Transverse colon (tissue), 4 donors: ENCODE measurements at regions of chr1 and their contacts with region 1.

Region 1: GRCh38 chr1:7646981-7647901 is 123.9 kb upstream of the VAMP3 start:
- DNase-seq: peak; percentile 74
- H3K4me3 ChIP-seq: no peak overlapping the region
- H3K27ac ChIP-seq: no peak overlapping the region
- H3K4me1 ChIP-seq: peaks cover 0 to 3% (median 0%) of the 10 kb centered on the region in 4 donors
- H3K27me3 ChIP-seq: no peaks in the 10 kb centered on the region
- CTCF ChIP-seq: peak; percentile 91 to 97 (median 94)
- EP300 ChIP-seq: no peak
- POLR2A ChIP-seq: no peak

Region 2: DNA sequence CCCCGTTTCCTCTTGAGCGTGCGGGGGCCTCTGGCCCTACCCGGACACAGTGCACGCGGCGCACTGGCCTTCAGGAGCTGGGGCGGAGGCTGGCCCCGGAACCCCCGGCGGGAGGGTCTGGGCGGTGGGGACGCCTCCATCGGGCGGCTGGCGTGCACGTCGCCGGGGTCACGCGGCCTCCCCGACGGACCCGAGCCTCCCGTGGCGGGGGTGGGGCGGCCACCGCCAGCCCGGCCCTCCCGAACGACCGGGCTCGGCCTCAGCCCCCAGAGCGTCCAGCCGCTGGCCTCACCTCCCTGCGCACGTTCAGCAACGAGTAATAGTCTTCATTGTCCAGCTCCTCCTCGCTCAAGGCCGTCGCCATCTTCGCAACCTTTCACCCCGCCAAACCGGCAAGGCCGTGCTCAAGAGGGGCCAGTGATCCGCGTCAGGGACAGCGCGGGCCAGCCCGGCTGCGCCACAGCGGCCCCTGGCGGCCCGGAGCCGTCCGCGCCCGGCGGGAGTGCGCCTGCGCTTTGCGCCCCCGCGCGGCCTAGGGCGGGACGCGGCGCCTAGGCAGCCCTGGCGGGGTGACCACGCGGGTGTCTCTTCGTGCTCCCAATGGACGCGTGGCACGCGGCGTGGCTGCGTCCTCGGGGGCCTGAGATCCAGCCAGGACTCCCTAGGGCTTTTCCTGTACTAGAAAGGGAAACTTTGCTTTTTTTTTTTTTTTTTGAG is 945.6 kb before region 1 on chr1 and contains the start of gene DNAJC11:
- in situ Hi-C with region 1: loop called in 1 of 4 experiments (anchors 25 kb)
- intact Hi-C with region 1: no loop called
- DNase-seq: peak; percentile 91
- H3K4me3 ChIP-seq: peak within 1 kb of the TSS; percentile 81 to 99 (median 96)
- H3K27ac ChIP-seq: peak within 1 kb of the TSS; percentile 85 to 96 (median 92)
- H3K4me1 ChIP-seq: peaks cover 3 to 47% (median 25%) of the 10 kb centered on the region in 4 donors
- H3K27me3 ChIP-seq: no peaks in the 10 kb centered on the region
- CTCF ChIP-seq: peak; percentile 45 to 90 (median 76)
- EP300 ChIP-seq: no peak
- POLR2A ChIP-seq: peak; percentile 30
- total RNA-seq, gene DNAJC11: 62.1 to 80.0 (median 70.9) TPM

Region 3: GRCh38 chr1:6794164-6794563 is 853.1 kb before region 1 on chr1:
- in situ Hi-C with region 1: no loop called
- intact Hi-C with region 1: loop called (anchors 5 kb)
- DNase-seq: no peak
- H3K4me3 ChIP-seq: no peak overlapping the region
- H3K27ac ChIP-seq: no peak overlapping the region
- H3K4me1 ChIP-seq: peaks cover 0 to 30% (median 2%) of the 10 kb centered on the region in 4 donors
- H3K27me3 ChIP-seq: no peaks in the 10 kb centered on the region
- CTCF ChIP-seq: peak; percentile 35 to 52 (median 42)
- EP300 ChIP-seq: no peak
- POLR2A ChIP-seq: no peak

Region 4: DNA sequence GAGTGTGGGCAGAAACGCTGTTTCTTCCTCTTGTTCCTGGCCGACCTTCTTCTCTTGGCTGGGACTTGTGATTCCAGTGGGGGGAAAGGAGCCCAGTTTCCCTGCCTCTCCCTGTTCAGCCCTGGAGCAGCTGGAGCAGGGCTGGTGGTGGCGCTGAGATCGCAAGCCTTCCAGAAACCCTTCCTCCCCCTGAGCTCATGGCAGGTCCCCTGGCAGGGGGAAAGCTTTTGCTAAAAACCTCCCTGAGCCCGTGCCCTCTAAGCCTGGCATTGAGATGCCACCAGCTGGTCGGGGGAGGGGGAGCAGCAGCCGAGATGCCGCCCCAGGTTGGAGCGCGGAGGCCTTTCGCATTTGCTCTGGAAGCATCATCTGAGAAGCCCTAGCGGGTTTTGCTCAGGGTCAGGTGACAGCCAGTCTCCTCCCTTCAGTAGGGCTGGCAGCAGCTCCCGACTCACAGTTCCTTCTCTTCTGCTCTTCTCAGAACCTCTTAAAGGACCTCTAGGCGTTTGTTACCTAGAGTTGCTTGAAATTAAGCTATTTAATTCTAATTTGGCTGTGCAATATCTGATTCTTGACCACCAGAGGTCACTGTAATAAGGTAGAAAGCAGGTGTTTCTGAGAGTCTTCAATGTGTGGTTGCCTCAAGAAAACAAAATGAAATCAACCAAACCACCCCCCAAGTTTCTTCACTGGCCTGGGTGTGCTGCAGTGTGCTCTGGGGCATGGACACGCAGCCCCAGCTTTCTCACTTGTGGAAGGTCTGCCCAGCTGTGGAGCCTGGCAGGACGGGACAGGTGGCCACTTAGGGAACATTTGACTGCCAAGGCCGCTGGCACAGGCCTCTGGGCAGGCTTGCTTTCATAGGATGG is 604.7 kb before region 1 on chr1:
- in situ Hi-C with region 1: loop called in 2 of 4 experiments (anchors 25 kb)
- intact Hi-C with region 1: loop called (anchors 10 kb)
- DNase-seq: no peak
- H3K4me3 ChIP-seq: no peak overlapping the region
- H3K27ac ChIP-seq: no peak overlapping the region
- H3K4me1 ChIP-seq: no peaks in the 10 kb centered on the region
- H3K27me3 ChIP-seq: peaks cover 14% of the 10 kb centered on the region
- CTCF ChIP-seq: peak; percentile 42 to 53 (median 44)
- EP300 ChIP-seq: no peak
- POLR2A ChIP-seq: no peak

Region 5: DNA sequence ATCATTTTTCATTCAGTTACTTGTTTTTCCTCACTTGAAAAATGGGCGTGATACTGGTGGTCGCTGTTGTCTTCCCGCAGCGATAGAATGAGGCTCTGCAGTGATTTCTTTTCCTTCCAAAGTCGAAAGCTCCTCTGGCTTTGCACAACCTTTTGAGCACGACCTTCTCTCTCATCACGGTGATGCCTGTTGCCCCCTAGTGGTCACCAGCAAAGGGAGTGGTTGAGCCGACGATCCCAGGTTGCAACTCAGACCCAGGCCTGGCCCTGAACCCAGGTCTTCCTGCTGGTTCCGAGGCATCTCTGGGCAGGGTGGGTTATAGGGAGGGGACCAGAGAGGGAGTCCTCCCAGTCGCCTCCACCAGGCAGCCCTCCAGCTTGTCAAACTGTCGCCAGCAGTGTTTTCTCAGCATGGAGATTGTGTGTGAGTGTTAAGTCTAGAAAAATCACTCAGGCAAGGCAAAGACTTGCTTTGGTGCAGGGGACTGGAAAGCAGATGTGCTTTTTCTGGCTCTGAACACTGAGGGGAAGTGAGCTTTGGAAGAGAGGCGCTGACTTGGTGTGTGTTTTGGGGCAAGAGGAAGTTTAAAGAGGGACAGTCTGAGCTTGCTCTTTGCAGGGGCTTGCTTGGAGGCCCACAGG is 576.7 kb before region 1 on chr1:
- in situ Hi-C with region 1: loop called in 2 of 4 experiments (anchors 25 kb)
- intact Hi-C with region 1: no loop called
- DNase-seq: peak; percentile 57
- H3K4me3 ChIP-seq: peak overlapping the region in 2 of 4 donors; percentile 10 to 38
- H3K27ac ChIP-seq: no peak overlapping the region
- H3K4me1 ChIP-seq: peaks cover 0 to 9% (median 5%) of the 10 kb centered on the region in 4 donors
- H3K27me3 ChIP-seq: peaks cover 16% of the 10 kb centered on the region
- CTCF ChIP-seq: peak; percentile 71 to 85 (median 81)
- EP300 ChIP-seq: no peak
- POLR2A ChIP-seq: no peak

Region 6: GRCh38 chr1:7207875-7208646 is 439.2 kb before region 1 on chr1:
- in situ Hi-C with region 1: loop called in 2 of 4 experiments (anchors 25 kb)
- intact Hi-C with region 1: no loop called
- DNase-seq: peak; percentile 35
- H3K4me3 ChIP-seq: no peak overlapping the region
- H3K27ac ChIP-seq: no peak overlapping the region
- H3K4me1 ChIP-seq: no peaks in the 10 kb centered on the region
- H3K27me3 ChIP-seq: peaks cover 4% of the 10 kb centered on the region
- CTCF ChIP-seq: peak; percentile 16 to 52 (median 45)
- EP300 ChIP-seq: no peak
- POLR2A ChIP-seq: no peak

Region 7: DNA sequence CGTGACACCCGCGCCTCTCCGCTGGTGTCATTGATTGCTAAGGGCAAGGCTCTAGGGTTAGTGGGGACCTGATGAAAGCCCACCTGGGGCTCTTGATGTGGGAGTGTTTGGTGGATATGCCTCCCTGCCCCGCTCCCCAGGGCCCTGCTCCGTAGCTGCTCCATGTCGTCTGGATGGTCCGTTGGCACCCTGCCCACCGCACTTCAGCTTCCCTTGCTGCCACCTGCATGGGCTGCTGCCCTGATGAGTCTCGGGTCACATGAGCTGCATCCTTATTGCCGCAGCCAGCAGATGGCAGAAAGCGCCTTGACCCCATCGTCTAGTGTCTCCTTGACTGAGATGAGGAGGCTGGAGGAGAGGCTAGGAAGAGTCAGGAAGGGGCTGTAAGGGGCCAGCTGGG is 422.6 kb before region 1 on chr1:
- in situ Hi-C with region 1: loop called in 3 of 4 experiments (anchors 10 to 25 kb)
- intact Hi-C with region 1: no loop called
- DNase-seq: peak; percentile 38
- H3K4me3 ChIP-seq: no peak overlapping the region
- H3K27ac ChIP-seq: no peak overlapping the region
- H3K4me1 ChIP-seq: no peaks in the 10 kb centered on the region
- H3K27me3 ChIP-seq: no peaks in the 10 kb centered on the region
- CTCF ChIP-seq: peak in 4 of 5 experiments; percentile 17 to 49 (median 30)
- EP300 ChIP-seq: no peak
- POLR2A ChIP-seq: no peak

Region 8: GRCh38 chr1:7526867-7527732 is 120.1 kb before region 1 on chr1:
- in situ Hi-C with region 1: no loop called
- intact Hi-C with region 1: no loop called
- DNase-seq: no peak
- H3K4me3 ChIP-seq: no peak overlapping the region
- H3K27ac ChIP-seq: no peak overlapping the region
- H3K4me1 ChIP-seq: no peaks in the 10 kb centered on the region
- H3K27me3 ChIP-seq: no peaks in the 10 kb centered on the region
- CTCF ChIP-seq: no peak
- EP300 ChIP-seq: no peak
- POLR2A ChIP-seq: no peak